Natural killer cell (primary cell): ENCODE measurements at regions of chr4 and their contacts with region 1.

Region 1: GRCh38 chr4:4260253-4260652 is 12.2 kb upstream of the TMEM128 start:
- DNase-seq: peak in 1 of 2 donors; percentile 81
- ATAC-seq: peak; percentile 96 to 100 (median 100)
- H3K4me3 ChIP-seq: no peak overlapping the region
- H3K4me3 Mint-ChIP-seq: no peak overlapping the region
- H3K27ac ChIP-seq: peak overlapping the region; percentile 16
- H3K27ac Mint-ChIP-seq: peak overlapping the region; percentile 43 to 67
- H3K4me1 ChIP-seq: no peaks in the 10 kb centered on the region
- H3K4me1 Mint-ChIP-seq: peaks cover 16 to 27% of the 10 kb centered on the region in 2 donors
- H3K27me3 ChIP-seq: no peaks in the 10 kb centered on the region
- H3K27me3 Mint-ChIP-seq: no peaks in the 10 kb centered on the region
- CTCF ChIP-seq: peak; percentile 85

Region 2: DNA sequence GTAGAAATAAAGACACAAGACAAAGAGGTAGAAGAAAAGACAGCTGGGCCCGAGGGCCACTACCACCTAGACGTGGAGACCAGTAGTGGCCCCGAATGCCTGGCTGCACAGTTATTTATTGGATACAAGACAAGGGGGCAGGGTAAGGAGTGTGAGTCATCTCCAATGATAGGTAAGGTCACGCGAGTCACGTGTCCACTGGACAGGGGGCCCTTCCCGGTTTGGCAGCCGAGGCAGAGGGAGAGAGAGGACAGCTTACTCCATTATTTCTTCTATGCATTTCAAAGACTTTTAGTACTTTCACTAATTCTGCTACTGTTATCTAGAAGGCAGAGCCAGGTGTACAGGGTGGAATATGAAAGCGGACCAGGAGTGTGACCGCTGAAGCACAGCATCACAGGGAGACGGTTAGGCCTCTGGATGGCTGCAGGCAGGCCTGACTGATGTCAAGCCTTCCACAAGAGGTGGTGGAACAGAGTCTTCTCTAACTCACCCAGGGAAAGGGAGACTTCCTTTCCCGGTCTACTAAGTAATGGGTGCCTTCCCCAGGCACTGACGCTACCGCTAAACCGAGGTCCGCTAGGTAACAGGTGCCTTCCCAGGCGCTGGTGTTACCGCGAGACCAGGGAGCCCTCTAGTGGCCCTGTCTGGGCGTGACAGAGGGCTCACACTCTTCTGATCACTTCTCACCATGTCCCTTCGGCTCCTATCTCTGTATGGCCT is 74.7 kb after region 1 on chr4:
- intact Hi-C with region 1: loop called (anchors 1 kb)
- DNase-seq: peak; percentile 73 to 89
- ATAC-seq: peak; percentile 71 to 95 (median 89)
- H3K4me3 ChIP-seq: no peak overlapping the region
- H3K4me3 Mint-ChIP-seq: no peak overlapping the region
- H3K27ac ChIP-seq: no peak overlapping the region
- H3K27ac Mint-ChIP-seq: peak overlapping the region in 1 of 2 donors; percentile 50
- H3K4me1 ChIP-seq: peaks cover 4% of the 10 kb centered on the region
- H3K4me1 Mint-ChIP-seq: peaks cover 8 to 9% of the 10 kb centered on the region in 2 donors
- H3K27me3 ChIP-seq: no peaks in the 10 kb centered on the region
- H3K27me3 Mint-ChIP-seq: no peaks in the 10 kb centered on the region
- CTCF ChIP-seq: peak; percentile 94

Region 3: GRCh38 chr4:4430492-4431197 is 170.4 kb after region 1 on chr4:
- intact Hi-C with region 1: loop called (anchors 1 kb)
- DNase-seq: peak; percentile 29 to 77
- ATAC-seq: peak in 2 of 3 donors; percentile 87 to 91
- H3K4me3 ChIP-seq: no peak overlapping the region
- H3K4me3 Mint-ChIP-seq: no peak overlapping the region
- H3K27ac ChIP-seq: no peak overlapping the region
- H3K27ac Mint-ChIP-seq: no peak overlapping the region
- H3K4me1 ChIP-seq: no peaks in the 10 kb centered on the region
- H3K4me1 Mint-ChIP-seq: peaks cover 0 to 7% of the 10 kb centered on the region in 2 donors
- H3K27me3 ChIP-seq: no peaks in the 10 kb centered on the region
- H3K27me3 Mint-ChIP-seq: no peaks in the 10 kb centered on the region
- CTCF ChIP-seq: peak; percentile 62